Mucosa of descending colon (tissue), 3 donors: ENCODE measurements at regions of chr1 and their contacts with region 1.

Region 1: GRCh38 chr1:220046052-220046930 is at the start of gene EPRS1:
- DNase-seq: peak; percentile 93 to 97 (median 96)
- ATAC-seq: peak; percentile 99
- H3K4me3 ChIP-seq: peak within 1 kb of the TSS; percentile 51
- H3K4me1 ChIP-seq: peaks cover 18% of the 10 kb centered on the region
- CTCF ChIP-seq: peak; percentile 88
- total RNA-seq, gene EPRS1: 65.5 to 69.4 (median 67.6) TPM

Region 2: DNA sequence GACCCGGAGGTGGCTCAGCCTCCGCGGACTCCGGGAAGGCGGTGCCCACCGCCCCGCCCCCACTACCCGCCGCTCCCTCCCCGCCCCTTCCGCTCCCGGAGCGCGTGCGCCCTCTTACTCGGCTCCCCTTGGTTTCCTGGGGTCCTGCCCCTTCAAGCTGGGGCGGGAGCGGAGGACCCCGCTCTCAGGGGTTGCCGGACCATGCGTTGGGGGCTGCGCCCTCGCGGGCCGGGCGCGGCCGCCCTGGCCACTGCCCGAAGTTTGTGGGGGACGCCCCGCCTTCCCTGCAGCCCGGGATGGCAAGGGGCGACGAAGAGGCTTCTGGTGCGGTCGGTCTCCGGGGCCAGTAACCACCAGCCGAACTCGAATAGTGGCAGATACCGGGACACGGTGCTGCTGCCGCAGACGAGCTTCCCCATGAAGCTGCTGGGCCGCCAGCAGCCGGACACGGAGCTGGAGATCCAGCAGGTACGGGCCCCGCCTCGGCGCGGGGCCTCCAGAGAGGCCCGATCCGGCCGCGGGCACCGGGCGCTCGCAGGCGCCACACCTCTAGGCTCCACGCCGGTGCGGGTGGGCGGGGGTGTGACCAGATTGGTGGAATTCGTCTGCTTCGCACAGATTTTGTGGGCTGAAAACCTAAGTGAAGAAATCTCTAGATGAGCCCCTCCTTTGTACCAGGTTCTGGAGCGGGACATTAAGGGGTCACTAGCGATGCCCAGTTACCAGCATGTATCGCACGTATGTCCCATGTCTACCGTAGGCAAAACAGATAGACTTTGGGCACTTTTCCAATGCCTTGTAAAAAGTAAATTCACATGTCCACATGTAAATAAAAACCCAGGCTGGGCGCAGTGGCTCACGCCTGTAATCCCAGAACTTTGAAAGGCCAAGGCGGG is 48.0 kb after region 1 on chr1 and contains the start of gene IARS2:
- intact Hi-C with region 1: loop called in 1 of 2 experiments (anchors 2 kb)
- DNase-seq: peak; percentile 73 to 97 (median 94)
- ATAC-seq: peak; percentile 92
- H3K4me3 ChIP-seq: peak within 1 kb of the TSS; percentile 83
- H3K4me1 ChIP-seq: peaks cover 9% of the 10 kb centered on the region
- CTCF ChIP-seq: no peak
- total RNA-seq, gene IARS2: 65.7 to 86.5 (median 73.6) TPM